Left ventricle myocardium superior (tissue), 1 donor: ENCODE measurements at regions of chr15 and their contacts with region 1.

Region 1: DNA sequence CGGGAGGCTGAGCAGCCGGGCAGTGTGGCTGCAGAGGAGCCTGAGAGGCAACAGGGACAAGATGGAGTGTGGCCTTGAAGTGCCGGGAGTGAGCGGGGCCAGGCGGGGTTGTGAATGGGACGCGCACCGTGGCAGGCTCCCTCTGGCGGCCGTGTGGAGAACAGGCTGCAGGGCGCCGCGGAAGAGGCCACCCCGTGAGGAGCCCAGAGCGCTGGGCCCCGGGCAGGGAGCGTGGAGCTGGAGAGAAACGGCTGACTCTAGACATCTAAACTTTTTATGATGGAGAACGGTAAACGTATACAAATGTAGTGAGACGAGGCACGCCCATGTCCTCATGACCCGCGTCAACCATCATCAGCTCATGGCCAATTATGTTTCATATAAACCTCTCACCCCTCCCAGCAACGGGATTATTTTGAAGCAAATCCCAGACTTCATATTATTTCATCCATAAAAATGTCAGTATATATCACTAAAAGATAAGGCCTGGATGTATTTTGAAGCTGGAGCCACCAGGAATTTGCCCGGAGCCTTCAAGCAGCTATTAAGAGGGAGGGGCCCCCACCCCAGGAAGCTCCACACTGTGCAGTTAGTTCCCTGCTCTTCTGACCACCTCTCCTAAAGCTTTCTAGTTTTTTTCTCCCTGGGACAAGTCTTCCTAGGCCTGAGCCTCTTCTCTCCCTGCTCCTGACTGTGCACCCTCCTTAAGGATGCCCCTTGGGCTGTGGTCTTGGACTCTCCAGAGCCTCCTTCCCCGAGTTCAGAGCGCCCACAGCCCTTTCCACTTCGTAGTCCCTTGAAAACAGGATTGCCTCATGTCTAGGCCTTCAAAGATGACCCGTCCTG is 149.4 kb downstream of the SMAD6 start:
- DNase-seq: peak; percentile 92
- ATAC-seq: peak; percentile 87

Region 2: DNA sequence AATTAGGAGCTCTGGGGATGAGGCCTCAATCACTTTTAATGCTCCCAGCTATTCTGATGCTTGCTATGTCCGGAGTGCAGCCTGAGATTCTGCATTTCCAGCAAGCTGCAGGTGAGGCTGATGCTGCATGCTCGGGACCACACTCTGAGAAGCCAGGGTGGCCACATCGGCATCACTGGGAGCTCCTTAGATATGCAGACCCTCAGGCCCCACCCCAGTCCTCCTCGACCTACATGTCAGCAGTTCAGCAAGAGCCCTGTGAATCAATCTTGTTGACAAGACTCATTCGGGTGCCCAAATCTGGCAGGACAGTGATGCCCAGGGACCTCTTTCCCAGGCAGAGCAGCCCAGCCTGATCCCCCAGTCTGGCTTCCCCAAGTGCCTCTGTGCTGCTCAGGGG is 241.6 kb before region 1 on chr15:
- intact Hi-C with region 1: loop called (anchors 5 kb)
- DNase-seq: no peak
- ATAC-seq: no peak

Region 3: DNA sequence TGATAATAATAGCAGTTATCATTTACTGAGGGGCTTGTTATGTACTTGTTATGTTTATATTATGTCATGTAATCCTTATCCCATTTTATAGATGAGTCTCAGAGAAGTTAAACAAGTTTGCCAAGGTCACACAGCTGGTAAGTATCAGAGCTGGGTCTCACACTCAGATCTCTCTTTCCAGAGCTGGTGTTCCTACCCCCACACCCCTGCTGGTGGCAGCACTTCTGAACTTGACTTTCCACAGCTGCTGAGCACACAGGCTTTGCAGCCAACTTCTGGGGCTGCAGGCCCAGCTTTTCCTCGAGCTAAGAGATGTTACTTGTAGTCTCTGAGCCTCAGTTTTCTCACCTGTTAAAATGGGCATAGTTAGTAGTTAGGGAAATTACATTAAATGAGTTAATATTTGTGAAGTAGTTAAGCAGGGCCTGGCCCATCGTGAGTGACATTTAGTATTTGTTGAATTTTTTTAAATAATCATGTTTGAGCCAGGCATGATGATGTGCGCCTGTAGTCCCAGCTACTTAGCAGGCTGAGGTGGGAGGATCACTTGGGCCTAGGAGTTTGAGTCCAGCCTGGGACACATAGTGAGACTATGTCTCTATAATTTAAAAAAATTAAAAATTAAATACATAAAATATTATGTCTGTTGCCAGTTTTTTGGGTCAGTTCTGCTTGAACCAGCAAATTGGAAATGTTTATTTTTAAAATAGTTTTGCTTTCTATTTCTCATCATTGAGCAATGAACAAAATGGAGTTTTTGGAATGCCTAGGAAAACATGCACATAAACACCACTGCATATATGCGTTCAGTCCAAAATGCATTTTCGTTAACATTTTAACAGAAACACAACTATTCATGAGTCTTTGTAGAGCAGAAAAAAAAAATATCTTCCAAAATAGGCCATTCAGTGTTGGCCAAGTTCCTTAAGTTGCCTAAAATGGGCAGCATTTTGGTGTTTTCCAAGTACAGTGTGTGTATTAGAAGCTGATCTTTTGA is 62.1 kb before region 1 on chr15:
- intact Hi-C with region 1: loop called (anchors 10 kb)
- DNase-seq: peak; percentile 63
- ATAC-seq: peak; percentile 85